ENCODE measurements at regions of chr3 and their contacts with region 1.

Region 1: DNA sequence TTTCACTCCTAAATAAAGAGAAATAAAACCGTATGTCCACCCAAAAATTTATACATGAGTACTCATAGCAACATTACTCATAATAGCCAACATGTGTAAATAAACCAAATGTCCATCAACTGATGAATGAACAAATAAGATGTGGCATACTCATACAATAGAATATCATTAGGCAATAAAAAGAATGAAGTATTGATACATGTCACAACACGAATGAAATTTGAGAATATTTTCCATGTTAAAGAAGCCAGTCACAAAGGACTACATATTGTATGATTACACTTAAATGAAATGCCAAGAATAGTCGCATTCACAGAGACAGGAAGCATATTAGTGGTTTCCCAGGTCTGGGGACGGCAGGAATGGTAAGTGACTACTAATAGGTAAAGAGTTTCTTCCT is 869.2 kb downstream of the IGSF11 start:
- DNase-seq: no peak
- ATAC-seq: no peak
- H3K4me3 ChIP-seq: no peak overlapping the region
- H3K27ac ChIP-seq: no peak overlapping the region
- H3K4me1 ChIP-seq: no peaks in the 10 kb centered on the region
- H3K27me3 ChIP-seq: no peaks in the 10 kb centered on the region
- CTCF ChIP-seq: no peak
- POLR2A ChIP-seq: no peak
- RAD21 ChIP-seq: no peak

Region 2: GRCh38 chr3:118117066-118117465 is 48.3 kb before region 1 on chr3:
- CTCF ChIA-PET with region 1: no interaction called
- POLR2A ChIA-PET with region 1: no interaction called
- dilution Hi-C with region 1: no loop called
- in situ Hi-C with region 1: no loop called
- intact Hi-C with region 1: loop called (anchors 1 kb)
- DNase-seq: no peak
- ATAC-seq: no peak
- H3K4me3 ChIP-seq: no peak overlapping the region
- H3K27ac ChIP-seq: no peak overlapping the region
- H3K4me1 ChIP-seq: no peaks in the 10 kb centered on the region
- H3K27me3 ChIP-seq: no peaks in the 10 kb centered on the region
- CTCF ChIP-seq: no peak
- POLR2A ChIP-seq: no peak
- RAD21 ChIP-seq: no peak

Measured in IMR-90 (cell line).